ENCODE measurements at regions of chr11 and their contacts with region 1.

Region 1: GRCh38 chr11:96054870-96055705 is 131.2 kb upstream of the MTMR2 start:
- DNase-seq: no peak
- H3K4me3 ChIP-seq: no peak overlapping the region
- H3K27ac ChIP-seq: peak overlapping the region in 1 of 2 donors; percentile 5
- H3K4me1 ChIP-seq: peaks cover 3% of the 10 kb centered on the region
- H3K27me3 ChIP-seq: no peaks in the 10 kb centered on the region
- CTCF ChIP-seq: peak; percentile 26 to 86 (median 78)
- POLR2A ChIP-seq: no peak

Region 2: GRCh38 chr11:96012086-96012824 is 42.8 kb before region 1 on chr11:
- intact Hi-C with region 1: loop called (anchors 5 kb)
- DNase-seq: peak; percentile 42
- H3K4me3 ChIP-seq: no peak overlapping the region
- H3K27ac ChIP-seq: peak overlapping the region in 1 of 2 donors; percentile 29
- H3K4me1 ChIP-seq: no peaks in the 10 kb centered on the region
- H3K27me3 ChIP-seq: no peaks in the 10 kb centered on the region
- CTCF ChIP-seq: peak in 3 of 4 experiments; percentile 40 to 54 (median 52)
- POLR2A ChIP-seq: no peak

Region 3: GRCh38 chr11:96143016-96143670 is 88.1 kb after region 1 on chr11:
- intact Hi-C with region 1: loop called (anchors 5 kb)
- DNase-seq: no peak
- H3K4me3 ChIP-seq: no peak overlapping the region
- H3K27ac ChIP-seq: peak overlapping the region; percentile 53 to 66
- H3K4me1 ChIP-seq: peaks cover 18% of the 10 kb centered on the region
- H3K27me3 ChIP-seq: no peaks in the 10 kb centered on the region
- CTCF ChIP-seq: no peak
- POLR2A ChIP-seq: no peak

Region 4: DNA sequence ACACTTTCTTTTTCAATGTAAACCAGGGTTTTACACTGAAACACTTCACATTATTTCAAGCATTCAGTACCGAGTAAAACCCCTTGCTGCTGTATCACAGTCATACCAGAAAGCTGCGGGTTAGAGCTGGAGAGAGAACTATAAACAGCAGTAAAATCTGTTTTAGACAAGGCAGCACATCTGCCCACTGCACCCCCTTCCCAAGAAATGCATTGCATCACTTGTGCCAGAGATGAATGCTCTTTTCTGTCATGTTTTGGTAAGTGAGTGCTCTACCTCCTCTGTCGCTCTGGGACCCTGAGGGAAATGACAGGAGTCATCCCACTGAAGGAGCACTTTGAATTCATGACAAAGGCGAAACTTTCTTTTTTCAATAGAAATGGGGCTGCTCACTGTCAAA is 180.7 kb after region 1 on chr11:
- intact Hi-C with region 1: loop called (anchors 10 kb)
- DNase-seq: no peak
- H3K4me3 ChIP-seq: no peak overlapping the region
- H3K27ac ChIP-seq: no peak overlapping the region
- H3K4me1 ChIP-seq: peaks cover 5% of the 10 kb centered on the region
- H3K27me3 ChIP-seq: no peaks in the 10 kb centered on the region
- CTCF ChIP-seq: no peak
- POLR2A ChIP-seq: no peak

Measured in prostate gland (tissue), 2 donors.